Caco-2 (cell line): ENCODE measurements at regions of chr4 and their contacts with region 1.

Region 1: DNA sequence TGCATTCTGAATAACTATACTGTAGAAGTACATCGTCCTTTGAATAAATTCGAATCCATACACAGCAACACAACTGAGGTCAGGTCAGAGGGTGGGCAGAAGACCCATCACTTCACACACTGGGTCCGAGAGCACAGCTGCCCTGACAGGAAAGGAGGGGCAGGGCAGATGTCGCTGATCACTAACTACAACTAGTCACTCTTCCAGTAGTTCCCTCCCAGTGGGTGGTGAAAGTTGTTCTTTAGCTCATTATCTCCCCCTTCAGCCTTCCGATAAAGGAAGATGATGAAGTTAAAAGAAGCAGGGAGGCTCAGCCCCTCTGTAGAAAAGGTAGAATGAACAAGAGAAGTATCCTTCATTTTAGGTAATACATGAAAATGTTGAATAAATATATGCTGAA is 278.9 kb downstream of the INPP4B start:
- DNase-seq: peak; percentile 45 to 49
- H3K4me3 ChIP-seq: no peak overlapping the region
- H3K4me3 Mint-ChIP-seq: peak overlapping the region; percentile 68
- H3K27ac Mint-ChIP-seq: no peak overlapping the region
- H3K4me1 ChIP-seq: peaks cover 42% of the 10 kb centered on the region
- H3K4me1 Mint-ChIP-seq: peaks cover 19% of the 10 kb centered on the region
- H3K27me3 ChIP-seq: no peaks in the 10 kb centered on the region
- H3K27me3 Mint-ChIP-seq: no peaks in the 10 kb centered on the region
- CTCF ChIP-seq: peak in 1 of 2 experiments; percentile 27

Region 2: DNA sequence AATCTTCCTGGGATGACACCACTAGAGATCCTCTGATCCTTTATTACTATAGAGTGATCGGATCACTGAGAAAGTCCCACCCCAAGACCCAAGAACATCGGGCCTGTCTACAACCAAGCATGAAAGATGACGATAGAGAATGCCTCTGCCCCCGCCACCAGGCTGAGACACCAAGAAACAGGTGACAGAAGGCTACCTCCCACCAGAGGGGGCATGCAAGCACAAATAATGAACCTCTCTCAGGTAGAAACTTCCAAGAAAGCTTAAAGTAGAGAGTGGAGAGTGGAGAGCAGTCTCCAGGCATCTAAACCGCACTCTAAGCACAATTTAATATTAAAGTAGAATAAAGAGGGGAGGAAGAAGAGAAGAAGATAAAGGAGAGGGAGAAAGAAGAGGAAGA is 123.7 kb before region 1 on chr4:
- CTCF ChIA-PET with region 1: no interaction called
- POLR2A ChIA-PET with region 1: no interaction called
- intact Hi-C with region 1: loop called (anchors 1 kb)
- DNase-seq: peak in 1 of 2 experiments; percentile 16
- H3K4me3 ChIP-seq: no peak overlapping the region
- H3K4me3 Mint-ChIP-seq: no peak overlapping the region
- H3K27ac Mint-ChIP-seq: no peak overlapping the region
- H3K4me1 ChIP-seq: no peaks in the 10 kb centered on the region
- H3K4me1 Mint-ChIP-seq: peaks cover 7% of the 10 kb centered on the region
- H3K27me3 ChIP-seq: no peaks in the 10 kb centered on the region
- H3K27me3 Mint-ChIP-seq: no peaks in the 10 kb centered on the region
- CTCF ChIP-seq: peak in 1 of 2 experiments; percentile 32

Region 3: DNA sequence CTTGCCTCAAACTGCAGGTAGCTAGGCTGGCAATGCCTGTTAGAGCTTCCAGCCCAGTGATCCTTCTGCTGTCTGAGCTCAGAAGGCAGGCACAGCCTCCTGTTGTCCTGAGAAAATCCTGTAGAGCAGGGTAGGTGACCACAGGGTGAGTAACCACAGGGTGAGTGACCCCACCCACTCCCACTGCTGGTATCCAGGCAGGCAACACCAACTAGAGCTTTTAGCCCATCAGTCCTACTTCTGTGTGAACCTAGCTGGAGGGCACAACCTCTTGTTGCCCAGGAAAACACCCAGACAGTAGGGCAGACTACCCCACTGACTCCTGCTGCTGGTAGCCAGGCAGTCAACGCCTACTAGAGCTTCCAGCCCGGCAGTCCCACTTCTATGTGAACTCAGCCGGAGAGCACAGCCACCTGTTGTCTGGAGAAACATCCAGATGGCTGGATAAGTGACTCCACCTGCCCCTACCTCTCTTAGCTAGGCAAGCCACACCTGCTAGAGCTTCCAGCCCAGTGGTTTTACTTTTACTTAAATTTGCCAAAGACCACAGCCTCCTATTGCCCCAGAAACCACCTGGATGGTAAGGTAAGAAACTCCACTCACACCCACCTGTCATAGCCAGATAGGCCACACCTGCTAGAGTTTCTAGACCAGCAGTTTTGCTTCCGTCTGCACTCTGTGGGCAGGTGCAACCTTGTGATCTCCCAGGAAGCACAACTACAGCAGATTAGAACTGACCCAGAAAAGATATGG is 92.7 kb before region 1 on chr4:
- CTCF ChIA-PET with region 1: no interaction called
- POLR2A ChIA-PET with region 1: no interaction called
- intact Hi-C with region 1: loop called (anchors 5 kb)
- DNase-seq: peak in 1 of 2 experiments; percentile 15
- H3K4me3 ChIP-seq: no peak overlapping the region
- H3K4me3 Mint-ChIP-seq: no peak overlapping the region
- H3K27ac Mint-ChIP-seq: no peak overlapping the region
- H3K4me1 ChIP-seq: peaks cover 11% of the 10 kb centered on the region
- H3K4me1 Mint-ChIP-seq: peaks cover 14% of the 10 kb centered on the region
- H3K27me3 ChIP-seq: no peaks in the 10 kb centered on the region
- H3K27me3 Mint-ChIP-seq: no peaks in the 10 kb centered on the region
- CTCF ChIP-seq: no peak

Region 4: GRCh38 chr4:142547974-142548373 is 19.2 kb before region 1 on chr4:
- CTCF ChIA-PET with region 1: no interaction called
- POLR2A ChIA-PET with region 1: no interaction called
- intact Hi-C with region 1: no loop called
- DNase-seq: no peak
- H3K4me3 ChIP-seq: no peak overlapping the region
- H3K4me3 Mint-ChIP-seq: no peak overlapping the region
- H3K27ac Mint-ChIP-seq: no peak overlapping the region
- H3K4me1 ChIP-seq: peaks cover 26% of the 10 kb centered on the region
- H3K4me1 Mint-ChIP-seq: peaks cover 15% of the 10 kb centered on the region
- H3K27me3 ChIP-seq: no peaks in the 10 kb centered on the region
- H3K27me3 Mint-ChIP-seq: no peaks in the 10 kb centered on the region
- CTCF ChIP-seq: no peak

Region 5: DNA sequence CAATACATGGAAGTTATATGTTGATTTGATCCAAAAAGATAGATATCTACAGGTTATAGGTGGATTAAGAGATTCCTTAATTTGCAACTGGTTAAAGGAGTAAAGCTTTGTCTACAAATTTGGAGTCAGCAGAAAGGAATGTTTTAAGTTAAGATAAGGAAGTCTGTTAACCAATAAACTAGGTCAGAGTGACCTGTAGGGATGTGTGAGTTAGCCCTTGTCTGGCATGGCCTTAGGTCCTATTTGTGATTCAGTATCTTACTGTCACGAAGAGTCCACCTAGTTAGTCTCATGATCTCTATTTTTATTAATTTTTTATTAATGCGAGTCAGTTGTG is 48.1 kb after region 1 on chr4:
- CTCF ChIA-PET with region 1: no interaction called
- POLR2A ChIA-PET with region 1: no interaction called
- intact Hi-C with region 1: loop called (anchors 2 kb)
- DNase-seq: peak in 1 of 2 experiments; percentile 8
- H3K4me3 ChIP-seq: no peak overlapping the region
- H3K4me3 Mint-ChIP-seq: no peak overlapping the region
- H3K27ac Mint-ChIP-seq: no peak overlapping the region
- H3K4me1 ChIP-seq: peaks cover 23% of the 10 kb centered on the region
- H3K4me1 Mint-ChIP-seq: peaks cover 20% of the 10 kb centered on the region
- H3K27me3 ChIP-seq: no peaks in the 10 kb centered on the region
- H3K27me3 Mint-ChIP-seq: no peaks in the 10 kb centered on the region
- CTCF ChIP-seq: no peak